Prostate gland (tissue), 2 donors: ENCODE measurements at regions of chr22 and their contacts with region 1.

Region 1: DNA sequence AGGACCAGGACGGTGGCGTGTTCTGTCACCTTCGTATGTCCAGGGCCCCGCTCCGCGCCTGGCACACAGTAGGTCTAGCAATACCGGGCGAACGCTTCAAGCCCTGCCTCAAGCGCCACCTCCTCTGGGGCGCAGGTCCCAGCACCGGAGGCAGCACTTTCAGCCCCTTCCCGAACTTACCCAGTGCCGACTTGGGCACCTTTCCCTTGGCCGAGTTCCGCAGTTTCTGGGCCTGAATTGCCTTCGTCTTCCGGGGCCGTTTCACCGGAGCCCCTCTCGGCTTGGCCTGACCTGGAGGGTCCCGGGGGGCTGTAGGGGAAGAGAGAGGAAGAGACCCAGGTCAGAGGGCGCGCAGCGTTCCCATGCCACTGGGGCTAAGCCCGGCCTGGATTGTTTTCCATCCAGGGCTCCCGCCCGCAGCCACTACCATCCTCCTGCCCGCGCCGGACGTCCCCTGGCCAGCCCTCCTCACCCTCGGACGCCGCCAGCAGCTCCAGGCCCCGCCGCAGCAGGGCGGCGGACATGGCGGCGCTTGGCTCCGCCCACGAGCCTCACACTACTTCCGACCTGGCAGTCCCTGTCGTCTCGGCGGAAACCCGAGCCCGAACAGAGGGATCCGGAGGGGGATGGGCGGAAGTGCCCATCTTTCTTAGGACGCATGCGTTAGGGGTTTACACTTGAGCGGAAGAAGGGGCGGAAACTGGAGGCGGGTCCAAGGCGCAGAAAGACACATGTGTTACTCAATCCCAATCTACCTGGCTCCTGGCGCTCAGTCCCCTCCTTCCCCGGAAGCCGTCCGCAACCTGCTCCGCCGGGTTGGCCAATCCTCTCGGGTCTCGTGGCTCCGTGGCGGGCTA is at the start of gene RPS19BP1:
- DNase-seq: peak; percentile 100
- H3K4me3 ChIP-seq: peak within 1 kb of the TSS; percentile 63 to 94
- H3K27ac ChIP-seq: peak within 1 kb of the TSS; percentile 85 to 90
- H3K4me1 ChIP-seq: peaks cover 34% of the 10 kb centered on the region
- H3K27me3 ChIP-seq: no peaks in the 10 kb centered on the region
- CTCF ChIP-seq: peak in 1 of 4 experiments; percentile 20
- POLR2A ChIP-seq: peak; percentile 87
- total RNA-seq, gene RPS19BP1: 186 to 264 TPM

Region 2: GRCh38 chr22:39490135-39490798 is 42.2 kb before region 1 on chr22:
- intact Hi-C with region 1: loop called (anchors 5 kb)
- DNase-seq: peak; percentile 75
- H3K4me3 ChIP-seq: no peak overlapping the region
- H3K27ac ChIP-seq: no peak overlapping the region
- H3K4me1 ChIP-seq: no peaks in the 10 kb centered on the region
- H3K27me3 ChIP-seq: no peaks in the 10 kb centered on the region
- CTCF ChIP-seq: no peak
- POLR2A ChIP-seq: no peak

Region 3: GRCh38 chr22:40024201-40025061 is 492.0 kb after region 1 on chr22:
- intact Hi-C with region 1: loop called (anchors 5 kb)
- DNase-seq: peak; percentile 69
- H3K4me3 ChIP-seq: no peak overlapping the region
- H3K27ac ChIP-seq: no peak overlapping the region
- H3K4me1 ChIP-seq: peaks cover 22% of the 10 kb centered on the region
- H3K27me3 ChIP-seq: no peaks in the 10 kb centered on the region
- CTCF ChIP-seq: peak; percentile 73 to 91 (median 86)
- POLR2A ChIP-seq: no peak

Region 4: DNA sequence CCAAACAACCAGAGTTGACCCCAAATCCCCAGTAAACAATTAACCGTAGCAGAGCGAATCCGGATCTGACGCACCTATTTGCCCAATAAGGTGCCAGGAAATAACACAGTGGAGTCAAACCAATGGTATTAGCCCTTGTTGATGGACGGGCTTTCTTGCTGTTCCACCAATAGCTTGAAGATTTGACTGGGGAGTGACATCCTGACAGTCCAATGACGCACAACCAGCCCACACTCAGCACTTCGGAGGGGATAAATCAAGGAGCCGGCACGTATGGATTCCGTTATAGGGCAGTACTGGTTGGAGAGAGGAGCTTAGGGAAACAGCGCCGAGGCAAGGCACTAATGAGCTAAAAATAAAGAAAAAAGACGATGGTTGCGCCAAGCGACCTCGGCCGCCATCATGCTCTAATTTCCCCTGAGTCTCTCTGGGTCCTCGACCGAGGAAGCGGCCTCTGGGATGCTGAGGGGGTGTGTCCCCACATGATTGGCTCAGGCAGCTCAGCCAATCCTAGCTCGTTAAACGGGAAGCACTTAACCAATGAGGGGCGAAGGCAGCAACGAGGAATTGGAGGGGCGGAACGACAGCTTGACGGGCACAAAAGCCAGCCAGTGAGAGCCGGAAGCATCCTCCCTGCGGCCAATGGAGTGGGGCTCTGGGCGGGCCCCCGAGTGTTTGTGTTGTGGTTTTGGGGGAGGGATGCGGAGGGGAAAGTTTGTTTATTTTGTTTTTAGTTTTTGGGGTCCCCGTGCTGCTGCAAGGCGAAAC is 511.8 kb after region 1 on chr22:
- intact Hi-C with region 1: loop called (anchors 5 kb)
- DNase-seq: peak; percentile 99
- H3K4me3 ChIP-seq: peak overlapping the region; percentile 61 to 81
- H3K27ac ChIP-seq: peak overlapping the region; percentile 91 to 92
- H3K4me1 ChIP-seq: peaks cover 15% of the 10 kb centered on the region
- H3K27me3 ChIP-seq: no peaks in the 10 kb centered on the region
- CTCF ChIP-seq: peak in 1 of 4 experiments; percentile 15
- POLR2A ChIP-seq: peak; percentile 51